Astrocyte of the cerebellum (primary cell): ENCODE measurements at regions of chr2 and their contacts with region 1.

Region 1: GRCh38 chr2:192333642-192334041 is 138.9 kb upstream of the TMEFF2 start:
- DNase-seq: no peak
- H3K4me3 ChIP-seq: no peak overlapping the region
- CTCF ChIP-seq: no peak

Region 2: DNA sequence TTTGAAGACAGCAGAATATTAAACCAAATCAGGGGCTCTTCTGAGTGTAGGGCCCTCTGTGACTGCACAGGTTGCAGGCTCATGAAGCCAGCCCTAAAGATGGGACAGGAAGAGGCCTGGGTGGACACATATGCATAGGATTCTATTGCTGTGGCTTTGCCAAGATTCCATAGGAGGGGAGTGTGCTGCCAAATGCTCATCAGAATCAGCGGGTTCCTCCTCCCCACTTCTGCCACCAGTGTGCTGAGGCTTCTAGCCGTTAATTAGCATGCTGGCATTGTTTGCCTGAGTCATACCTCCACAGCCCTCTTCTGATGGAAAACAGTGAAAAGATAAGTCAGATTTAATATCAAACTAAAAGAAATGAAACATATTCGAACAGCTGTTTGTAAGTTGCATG is 35.0 kb before region 1 on chr2:
- in situ Hi-C with region 1: loop called (anchors 5 kb)
- DNase-seq: no peak
- H3K4me3 ChIP-seq: no peak overlapping the region
- CTCF ChIP-seq: no peak